ENCODE measurements at regions of chr5 and their contacts with region 1.

Region 1: DNA sequence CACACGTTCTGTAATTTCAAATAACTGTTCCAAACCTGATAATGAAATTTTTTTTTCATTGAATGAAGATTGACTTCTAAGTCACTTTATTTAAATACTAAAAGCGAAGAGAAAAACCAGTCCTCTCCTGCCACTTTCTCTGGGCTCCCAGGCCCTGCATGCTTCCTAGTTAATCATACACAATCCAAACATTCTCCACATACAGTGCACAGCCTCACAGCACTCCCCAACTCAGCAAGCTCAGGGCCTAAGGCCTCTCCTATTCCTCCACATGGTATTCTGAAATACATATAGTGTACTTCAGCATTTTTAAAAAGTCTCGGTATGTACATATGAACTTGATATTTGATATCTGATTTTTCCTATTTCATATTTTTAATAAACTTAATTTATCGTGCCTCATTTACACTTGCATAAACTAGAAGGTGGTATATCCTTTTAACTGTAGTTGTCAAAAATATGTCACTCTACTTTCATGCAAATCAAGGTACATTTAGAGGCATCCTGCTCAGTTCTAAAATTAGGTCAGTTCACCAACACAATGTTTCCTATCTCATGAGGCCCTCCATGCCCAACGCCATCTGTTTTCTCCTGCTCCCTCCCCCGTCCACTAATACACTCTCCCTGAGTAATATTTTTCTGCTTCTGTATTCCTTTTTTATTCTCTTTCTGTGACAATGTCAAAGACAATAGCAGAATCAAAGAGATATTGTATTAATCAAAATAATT is 206.7 kb downstream of the ARRDC3 start:
- DNase-seq: no peak
- H3K4me3 ChIP-seq: no peak overlapping the region
- H3K27ac ChIP-seq: no peak overlapping the region
- H3K4me1 ChIP-seq: no peaks in the 10 kb centered on the region
- H3K27me3 ChIP-seq: no peaks in the 10 kb centered on the region
- CTCF ChIP-seq: no peak

Region 2: DNA sequence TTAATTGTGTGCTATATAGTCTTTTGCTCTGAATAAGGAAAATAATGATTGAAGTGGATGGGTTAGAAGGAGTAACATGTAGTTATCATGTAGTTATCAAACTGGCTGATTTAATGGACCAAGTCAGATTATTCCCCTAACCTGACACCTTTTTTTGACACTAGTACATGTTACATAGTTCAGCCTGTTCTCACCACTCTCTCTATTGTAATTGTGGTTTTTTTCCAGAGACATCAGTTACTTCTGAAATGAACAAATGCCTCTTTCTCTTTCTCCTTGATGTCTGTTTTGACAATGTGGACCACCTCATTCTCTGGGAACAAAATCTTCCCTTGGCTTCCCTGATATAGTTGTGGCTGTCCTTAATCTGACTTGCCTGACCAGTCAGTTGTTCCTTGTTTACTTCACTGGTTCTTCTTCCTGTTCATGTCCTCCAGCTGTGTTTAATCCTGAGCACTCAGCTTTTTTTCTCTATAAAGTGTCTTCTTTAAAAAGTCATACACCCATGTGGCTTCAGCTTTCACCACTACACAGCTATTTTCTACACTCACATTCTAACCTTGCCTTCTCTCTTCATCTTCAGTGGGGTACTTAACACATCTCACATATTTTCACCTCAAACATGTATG is 36.8 kb before region 1 on chr5:
- CTCF ChIA-PET with region 1: no interaction called
- dilution Hi-C with region 1: loop called (anchors 5 kb)
- in situ Hi-C with region 1: no loop called
- intact Hi-C with region 1: no loop called
- DNase-seq: no peak
- H3K4me3 ChIP-seq: no peak overlapping the region
- H3K27ac ChIP-seq: no peak overlapping the region
- H3K4me1 ChIP-seq: peaks cover 29% of the 10 kb centered on the region
- H3K27me3 ChIP-seq: no peaks in the 10 kb centered on the region
- CTCF ChIP-seq: no peak